ENCODE measurements at regions of chr10 and their contacts with region 1.

Region 1: DNA sequence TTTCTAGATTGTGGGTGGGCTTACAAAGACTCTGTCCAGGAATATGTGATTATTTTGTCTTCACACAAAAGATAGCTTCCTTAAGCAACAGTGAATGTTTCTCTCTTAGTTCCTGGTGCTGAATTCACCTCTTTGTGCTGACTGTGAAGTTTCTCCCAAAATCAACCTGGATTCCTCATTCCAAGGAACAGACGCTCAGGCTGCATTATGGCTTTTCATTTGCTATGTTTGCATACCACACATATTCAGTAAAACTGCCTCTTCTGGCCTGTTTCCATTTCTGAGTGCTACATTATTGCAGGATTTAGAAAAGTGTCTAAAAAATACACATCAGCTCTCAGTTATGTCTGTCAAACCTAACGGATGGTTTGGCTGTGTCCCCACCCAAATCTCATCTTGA is 21.5 kb downstream of the MACROH2A2 start:
- DNase-seq: no peak

Region 2: DNA sequence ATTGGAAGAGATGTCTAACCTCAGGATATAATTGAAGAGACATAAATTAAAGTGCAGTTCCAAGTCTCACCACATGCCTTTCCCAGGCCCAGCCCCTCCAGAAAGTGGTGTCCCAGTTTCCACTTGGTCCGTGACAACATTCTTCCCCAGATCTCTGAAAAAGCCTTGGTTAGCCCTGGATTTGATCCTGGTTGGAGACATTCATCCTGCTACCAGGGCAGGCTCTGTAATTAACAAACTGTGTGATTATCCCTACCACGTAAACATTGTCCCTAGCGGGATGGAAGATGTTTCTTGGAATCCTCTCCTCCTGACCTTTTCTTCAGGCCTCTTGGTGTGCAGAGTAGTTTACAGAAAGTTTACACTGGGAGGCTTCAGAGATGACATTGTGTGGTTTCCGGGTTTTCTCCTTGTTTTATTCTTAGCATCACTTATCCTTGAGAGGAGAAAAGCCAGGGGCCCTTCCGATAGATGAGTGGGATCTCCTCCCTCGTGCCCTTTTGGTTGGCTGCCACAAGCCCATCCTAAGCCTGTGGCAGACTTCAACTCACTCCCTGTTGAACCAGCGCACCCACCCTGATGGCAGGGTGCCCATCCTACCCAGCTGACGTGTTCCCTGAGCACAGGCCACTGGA is 188.7 kb before region 1 on chr10:
- intact Hi-C with region 1: loop called in 1 of 2 experiments (anchors 5 kb)
- DNase-seq: no peak

Measured in posterior vena cava (tissue), 2 donors.